CD4-positive, alpha-beta T cell (primary cell): ENCODE measurements at regions of chr17 and their contacts with region 1.

Region 1: DNA sequence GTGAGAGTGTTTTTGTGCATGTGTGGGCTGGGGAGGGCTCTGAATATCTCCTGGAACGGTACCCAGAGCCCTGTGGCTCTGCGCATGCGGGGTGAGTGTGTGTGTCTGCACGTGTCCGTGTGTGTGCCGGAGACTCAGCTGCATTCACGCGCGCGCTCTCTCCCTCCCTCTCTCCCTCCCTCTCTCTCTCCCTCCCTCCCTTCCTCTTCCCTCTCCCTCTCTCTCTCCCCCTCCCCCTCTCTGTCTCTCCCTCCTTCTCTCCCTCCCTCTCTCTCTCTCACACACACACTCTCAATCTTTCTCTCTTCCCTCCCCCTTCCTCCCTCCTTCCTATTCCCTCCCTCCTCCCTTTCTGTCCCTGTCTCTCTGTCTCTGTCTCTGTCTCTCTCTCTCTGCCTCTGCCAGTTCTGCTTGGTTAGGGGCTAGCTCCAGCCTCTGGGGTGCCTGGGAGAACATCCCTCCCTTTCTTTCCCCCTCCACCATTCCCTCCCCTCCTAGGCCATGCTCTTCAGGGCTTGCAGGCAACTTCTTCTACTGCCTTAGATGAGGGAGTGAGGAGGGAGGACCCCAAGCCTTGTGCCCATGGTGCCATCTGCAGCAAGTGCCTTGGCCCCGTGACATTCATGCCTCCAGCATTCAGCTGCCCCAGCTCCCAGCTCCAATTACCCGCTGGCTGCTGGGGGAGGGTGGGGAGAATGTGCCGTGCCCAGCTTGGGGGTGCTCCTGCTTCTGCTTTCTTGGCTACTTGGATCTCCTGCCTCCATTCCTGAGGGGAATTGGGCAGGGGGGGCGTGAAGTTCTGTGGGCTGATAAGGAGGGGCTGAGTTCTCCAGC is 6.4 kb downstream of the THRA start:
- DNase-seq: peak; percentile 68 to 89 (median 80)
- ATAC-seq: peak; percentile 71
- H3K4me3 ChIP-seq: peak overlapping the region; percentile 51
- H3K4me3 Mint-ChIP-seq: peak overlapping the region; percentile 89
- H3K27ac ChIP-seq: peak overlapping the region; percentile 73 to 74
- H3K27ac Mint-ChIP-seq: peak overlapping the region; percentile 96
- H3K4me1 ChIP-seq: peaks cover 85% of the 10 kb centered on the region
- H3K4me1 Mint-ChIP-seq: peaks cover 85% of the 10 kb centered on the region
- H3K27me3 ChIP-seq: no peaks in the 10 kb centered on the region
- H3K27me3 Mint-ChIP-seq: no peaks in the 10 kb centered on the region
- CTCF ChIP-seq: no peak

Region 2: DNA sequence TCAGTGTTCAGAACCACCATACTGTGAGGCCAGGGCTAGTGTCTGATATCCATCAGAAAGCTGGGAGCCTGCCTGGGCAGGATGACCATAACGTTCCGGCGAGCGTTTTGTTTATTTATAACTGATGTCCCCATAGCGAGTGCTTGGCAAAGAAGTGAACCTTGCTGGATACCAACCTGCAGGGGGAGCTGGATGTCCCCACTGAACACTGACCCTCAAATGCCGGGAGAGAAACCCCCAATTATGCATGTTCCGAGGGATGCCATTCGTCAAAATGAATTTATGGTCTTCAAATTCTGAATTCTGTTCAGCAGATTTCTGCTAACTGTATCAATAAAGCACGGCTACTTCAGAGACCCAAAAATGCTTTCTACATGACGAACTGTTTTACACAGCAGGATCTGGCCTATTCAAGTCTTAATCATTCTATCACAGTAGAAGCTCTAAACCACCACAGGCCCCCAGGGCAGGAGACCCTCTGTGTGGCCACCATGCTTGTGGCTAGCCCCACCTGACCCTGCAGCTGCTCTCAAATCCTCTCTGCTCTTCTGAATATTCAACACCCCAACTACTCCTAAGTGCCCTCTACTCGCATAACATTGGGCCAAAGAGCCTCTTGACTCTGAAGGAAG is 30.1 kb before region 1 on chr17:
- CTCF ChIA-PET with region 1: no interaction called
- POLR2A ChIA-PET with region 1: no interaction called
- intact Hi-C with region 1: no loop called
- DNase-seq: peak in 3 of 14 experiments; percentile 10 to 27 (median 18)
- ATAC-seq: no peak
- H3K4me3 ChIP-seq: no peak overlapping the region
- H3K4me3 Mint-ChIP-seq: no peak overlapping the region
- H3K27ac ChIP-seq: no peak overlapping the region
- H3K27ac Mint-ChIP-seq: no peak overlapping the region
- H3K4me1 ChIP-seq: no peaks in the 10 kb centered on the region
- H3K4me1 Mint-ChIP-seq: peaks cover 4% of the 10 kb centered on the region
- H3K27me3 ChIP-seq: no peaks in the 10 kb centered on the region
- H3K27me3 Mint-ChIP-seq: no peaks in the 10 kb centered on the region
- CTCF ChIP-seq: peak; percentile 41

Region 3: DNA sequence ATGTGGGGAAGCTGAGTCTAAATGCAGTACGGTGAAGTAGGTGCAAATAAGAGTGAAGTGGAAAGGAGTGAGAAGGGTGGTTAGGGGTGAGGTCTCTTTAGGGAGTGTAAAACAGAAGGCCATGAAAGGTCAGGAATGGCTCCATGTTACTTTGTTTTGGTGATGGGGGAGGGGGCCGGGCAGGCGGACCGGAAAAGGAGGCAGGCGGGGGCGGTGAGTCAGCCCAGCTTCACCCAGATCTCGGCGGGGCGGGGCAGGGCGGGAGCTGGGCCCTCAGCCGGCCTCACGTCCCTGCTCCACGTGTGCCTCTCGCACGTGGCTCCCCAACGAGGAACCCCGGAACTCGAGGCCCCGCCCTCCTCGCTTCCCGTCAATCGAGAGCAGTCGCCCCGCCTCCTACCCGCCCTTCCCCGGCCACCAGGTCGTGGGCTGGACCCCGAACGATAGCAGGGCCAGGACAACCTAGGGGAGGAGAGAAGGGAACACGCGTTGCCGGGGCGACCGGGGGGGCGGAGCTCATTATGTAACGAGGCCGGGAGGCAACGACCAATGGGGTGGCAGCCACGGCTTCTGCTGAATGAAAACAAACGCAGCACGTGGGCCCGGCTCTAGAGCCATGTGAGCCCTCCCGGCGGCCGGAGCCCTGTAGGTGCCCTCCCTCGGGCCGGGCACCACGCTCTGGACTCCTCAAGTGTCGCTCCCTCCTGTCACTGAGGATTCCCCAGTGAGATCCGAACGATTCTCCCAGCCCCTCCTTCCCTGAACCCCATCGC is 29.9 kb after region 1 on chr17:
- CTCF ChIA-PET with region 1: interaction called, 4 read pairs
- POLR2A ChIA-PET with region 1: interaction called, 46 read pairs
- intact Hi-C with region 1: loop called in 1 of 2 experiments (anchors 5 kb)
- DNase-seq: peak; percentile 99 to 100 (median 99)
- ATAC-seq: peak; percentile 63
- H3K4me3 ChIP-seq: peak overlapping the region; percentile 85
- H3K4me3 Mint-ChIP-seq: peak overlapping the region; percentile 97
- H3K27ac ChIP-seq: peak overlapping the region; percentile 94 to 96
- H3K27ac Mint-ChIP-seq: peak overlapping the region; percentile 91
- H3K4me1 ChIP-seq: peaks cover 97% of the 10 kb centered on the region
- H3K4me1 Mint-ChIP-seq: peaks cover 90% of the 10 kb centered on the region
- H3K27me3 ChIP-seq: no peaks in the 10 kb centered on the region
- H3K27me3 Mint-ChIP-seq: no peaks in the 10 kb centered on the region
- CTCF ChIP-seq: no peak